Psoas muscle (tissue), 8 donors: ENCODE measurements at regions of chr6 and their contacts with region 1.

Region 1: DNA sequence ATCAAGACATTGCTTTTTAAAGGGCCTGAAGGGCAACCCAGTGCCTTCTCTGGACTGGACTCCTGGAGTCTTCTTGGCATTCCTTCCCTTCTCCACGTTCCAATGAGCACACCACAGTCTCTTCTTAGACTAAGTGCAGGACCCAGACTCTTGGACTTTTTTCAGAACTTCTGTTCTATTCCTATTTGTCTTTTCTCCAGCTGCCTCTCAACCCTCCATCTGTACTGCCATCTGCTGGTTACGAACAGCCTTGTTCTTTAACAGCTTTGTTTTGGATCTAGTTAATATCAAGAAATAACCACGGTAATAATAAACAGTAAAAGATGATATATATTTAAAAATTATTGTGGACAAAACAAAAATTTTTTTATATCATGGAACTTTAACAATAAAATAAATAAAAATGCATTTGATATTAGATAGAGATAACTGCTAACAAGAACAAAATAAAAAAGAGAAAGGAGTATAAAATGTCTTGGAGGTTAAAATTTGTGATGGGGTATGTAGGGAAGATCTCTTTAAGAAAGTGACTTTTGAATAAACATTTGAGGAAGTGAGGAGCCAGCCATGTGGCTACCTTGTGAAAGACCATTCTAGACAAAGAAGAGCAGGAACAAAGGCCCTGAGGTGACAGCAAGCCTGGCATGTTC is 105.1 kb upstream of the HCRTR2 start:
- DNase-seq: no peak
- ATAC-seq: no peak
- H3K4me3 ChIP-seq: no peak overlapping the region
- H3K27ac ChIP-seq: no peak overlapping the region
- H3K4me1 ChIP-seq: no peaks in the 10 kb centered on the region
- H3K27me3 ChIP-seq: no peaks in the 10 kb centered on the region
- CTCF ChIP-seq: peak; percentile 26

Region 2: GRCh38 chr6:54717849-54718455 is 351.3 kb before region 1 on chr6:
- intact Hi-C with region 1: loop called in 1 of 2 experiments (anchors 5 kb)
- DNase-seq: no peak
- ATAC-seq: peak in 2 of 4 donors; percentile 66 to 67
- H3K4me3 ChIP-seq: no peak overlapping the region
- H3K27ac ChIP-seq: no peak overlapping the region
- H3K4me1 ChIP-seq: no peaks in the 10 kb centered on the region
- H3K27me3 ChIP-seq: no peaks in the 10 kb centered on the region
- CTCF ChIP-seq: peak; percentile 81

Region 3: DNA sequence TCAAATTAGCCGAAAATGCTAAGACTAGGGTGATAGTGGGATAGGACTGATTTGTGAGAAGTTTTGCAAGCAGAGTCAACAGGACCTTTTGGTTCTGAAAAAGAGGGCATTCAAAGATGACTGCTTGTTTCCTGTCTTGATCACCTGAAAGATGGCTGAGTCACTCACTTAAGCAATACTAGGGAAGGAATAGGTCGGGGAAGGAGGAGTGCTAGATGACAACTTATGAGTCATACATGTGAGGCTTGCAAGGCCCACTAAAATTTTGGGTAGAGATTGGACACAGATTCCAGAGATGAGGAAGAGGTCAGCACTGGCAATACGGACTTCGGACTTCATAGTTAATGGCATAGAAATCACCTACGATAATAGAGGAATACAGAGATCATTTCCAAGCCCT is 133.5 kb before region 1 on chr6:
- intact Hi-C with region 1: no loop called
- DNase-seq: no peak
- ATAC-seq: no peak
- H3K4me3 ChIP-seq: no peak overlapping the region
- H3K27ac ChIP-seq: no peak overlapping the region
- H3K4me1 ChIP-seq: no peaks in the 10 kb centered on the region
- H3K27me3 ChIP-seq: no peaks in the 10 kb centered on the region
- CTCF ChIP-seq: no peak

Region 4: GRCh38 chr6:55176958-55177357 is 107.7 kb after region 1 on chr6:
- intact Hi-C with region 1: no loop called
- DNase-seq: no peak
- ATAC-seq: no peak
- H3K4me3 ChIP-seq: no peak overlapping the region
- H3K27ac ChIP-seq: no peak overlapping the region
- H3K4me1 ChIP-seq: no peaks in the 10 kb centered on the region
- H3K27me3 ChIP-seq: peaks cover 3 to 24% (median 8%) of the 10 kb centered on the region in 3 donors
- CTCF ChIP-seq: no peak